Mammary epithelial cell (primary cell): ENCODE measurements at regions of chr1 and their contacts with region 1.

Region 1: GRCh38 chr1:209692745-209693504 is 11.7 kb upstream of the HSD11B1 start:
- DNase-seq: peak; percentile 73
- H3K4me3 ChIP-seq: peak overlapping the region in 1 of 3 experiments; percentile 13
- H3K27ac ChIP-seq: peak overlapping the region; percentile 85
- H3K4me1 ChIP-seq: peaks cover 41% of the 10 kb centered on the region
- H3K27me3 ChIP-seq: no peaks in the 10 kb centered on the region
- CTCF ChIP-seq: peak; percentile 80 to 83

Region 2: GRCh38 chr1:209576798-209577197 is 116.1 kb before region 1 on chr1:
- CTCF ChIA-PET with region 1: no interaction called
- dilution Hi-C with region 1: no loop called
- in situ Hi-C with region 1: loop called in 1 of 2 experiments (anchors 5 kb)
- intact Hi-C with region 1: loop called (anchors 1 kb)
- DNase-seq: peak; percentile 76
- H3K4me3 ChIP-seq: no peak overlapping the region
- H3K27ac ChIP-seq: no peak overlapping the region
- H3K4me1 ChIP-seq: peaks cover 9% of the 10 kb centered on the region
- H3K27me3 ChIP-seq: no peaks in the 10 kb centered on the region
- CTCF ChIP-seq: peak; percentile 98

Region 3: DNA sequence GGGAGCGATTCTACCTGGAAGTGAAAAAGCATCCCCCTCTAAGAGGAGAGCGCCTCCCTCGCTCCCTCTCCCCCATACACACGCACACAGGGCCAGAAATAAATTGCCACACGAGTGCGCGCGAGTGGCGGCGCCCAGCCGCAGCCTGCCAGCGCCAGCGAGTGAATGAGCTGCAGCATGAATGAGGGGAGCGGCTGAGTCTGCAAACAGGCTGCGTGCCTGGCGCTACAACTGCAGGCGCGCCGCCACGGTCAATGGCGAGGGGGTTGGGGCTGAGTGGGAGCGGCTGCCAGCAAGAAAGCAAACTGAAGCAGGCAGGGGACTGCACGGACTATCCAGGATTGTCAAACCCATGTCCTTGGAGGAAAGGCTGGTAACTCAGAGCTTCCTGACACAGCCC is 107.3 kb before region 1 on chr1:
- CTCF ChIA-PET with region 1: no interaction called
- dilution Hi-C with region 1: loop called (anchors 5 kb)
- in situ Hi-C with region 1: no loop called
- intact Hi-C with region 1: no loop called
- DNase-seq: no peak
- H3K4me3 ChIP-seq: no peak overlapping the region
- H3K27ac ChIP-seq: no peak overlapping the region
- H3K4me1 ChIP-seq: peaks cover 17% of the 10 kb centered on the region
- H3K27me3 ChIP-seq: no peaks in the 10 kb centered on the region
- CTCF ChIP-seq: peak in 1 of 2 donors; percentile 5

Region 4: GRCh38 chr1:209601809-209602657 is 90.9 kb before region 1 on chr1:
- CTCF ChIA-PET with region 1: no interaction called
- dilution Hi-C with region 1: no loop called
- in situ Hi-C with region 1: no loop called
- intact Hi-C with region 1: loop called (anchors 1 kb)
- DNase-seq: peak; percentile 61
- H3K4me3 ChIP-seq: no peak overlapping the region
- H3K27ac ChIP-seq: no peak overlapping the region
- H3K4me1 ChIP-seq: peaks cover 1% of the 10 kb centered on the region
- H3K27me3 ChIP-seq: no peaks in the 10 kb centered on the region
- CTCF ChIP-seq: peak; percentile 80 to 93

Region 5: GRCh38 chr1:209659909-209660308 is 33.0 kb before region 1 on chr1:
- CTCF ChIA-PET with region 1: interaction called, 4 read pairs
- dilution Hi-C with region 1: no loop called
- in situ Hi-C with region 1: loop called (anchors 5 kb)
- intact Hi-C with region 1: loop called (anchors 1 kb)
- DNase-seq: peak; percentile 95
- H3K4me3 ChIP-seq: no peak overlapping the region
- H3K27ac ChIP-seq: peak overlapping the region; percentile 100
- H3K4me1 ChIP-seq: peaks cover 65% of the 10 kb centered on the region
- H3K27me3 ChIP-seq: no peaks in the 10 kb centered on the region
- CTCF ChIP-seq: no peak

Region 6: GRCh38 chr1:209674957-209675564 is 17.9 kb before region 1 on chr1 and contains the start of gene G0S2:
- CTCF ChIA-PET with region 1: no interaction called
- dilution Hi-C with region 1: no loop called
- in situ Hi-C with region 1: no loop called
- intact Hi-C with region 1: loop called (anchors 2 kb)
- DNase-seq: no peak
- H3K4me3 ChIP-seq: peak within 1 kb of the TSS; percentile 14 to 35 (median 26)
- H3K27ac ChIP-seq: no peak within 1 kb of the TSS
- H3K4me1 ChIP-seq: peaks cover 53% of the 10 kb centered on the region
- H3K27me3 ChIP-seq: no peaks in the 10 kb centered on the region
- CTCF ChIP-seq: no peak
- total RNA-seq, gene G0S2: 8.2 to 35.9 TPM

Region 7: GRCh38 chr1:209704584-209704983 is 11.7 kb after region 1 on chr1 and contains the start of gene HSD11B1:
- CTCF ChIA-PET with region 1: no interaction called
- dilution Hi-C with region 1: no loop called
- in situ Hi-C with region 1: no loop called
- intact Hi-C with region 1: no loop called
- DNase-seq: no peak
- H3K4me3 ChIP-seq: no peak within 1 kb of the TSS
- H3K27ac ChIP-seq: no peak within 1 kb of the TSS
- H3K4me1 ChIP-seq: peaks cover 11% of the 10 kb centered on the region
- H3K27me3 ChIP-seq: no peaks in the 10 kb centered on the region
- CTCF ChIP-seq: no peak
- total RNA-seq, gene HSD11B1: not detected

Region 8: GRCh38 chr1:209733409-209734192 is 40.7 kb after region 1 on chr1:
- CTCF ChIA-PET with region 1: no interaction called
- dilution Hi-C with region 1: no loop called
- in situ Hi-C with region 1: no loop called
- intact Hi-C with region 1: no loop called
- DNase-seq: peak; percentile 75
- H3K4me3 ChIP-seq: no peak overlapping the region
- H3K27ac ChIP-seq: no peak overlapping the region
- H3K4me1 ChIP-seq: no peaks in the 10 kb centered on the region
- H3K27me3 ChIP-seq: no peaks in the 10 kb centered on the region
- CTCF ChIP-seq: no peak

Region 9: GRCh38 chr1:209747580-209748262 is 54.8 kb after region 1 on chr1:
- CTCF ChIA-PET with region 1: interaction called, 4 read pairs
- dilution Hi-C with region 1: no loop called
- in situ Hi-C with region 1: no loop called
- intact Hi-C with region 1: loop called (anchors 1 kb)
- DNase-seq: peak; percentile 97
- H3K4me3 ChIP-seq: no peak overlapping the region
- H3K27ac ChIP-seq: no peak overlapping the region
- H3K4me1 ChIP-seq: peaks cover 7% of the 10 kb centered on the region
- H3K27me3 ChIP-seq: no peaks in the 10 kb centered on the region
- CTCF ChIP-seq: peak; percentile 69 to 74